ENCODE measurements at regions of chr20 and their contacts with region 1.

Region 1: DNA sequence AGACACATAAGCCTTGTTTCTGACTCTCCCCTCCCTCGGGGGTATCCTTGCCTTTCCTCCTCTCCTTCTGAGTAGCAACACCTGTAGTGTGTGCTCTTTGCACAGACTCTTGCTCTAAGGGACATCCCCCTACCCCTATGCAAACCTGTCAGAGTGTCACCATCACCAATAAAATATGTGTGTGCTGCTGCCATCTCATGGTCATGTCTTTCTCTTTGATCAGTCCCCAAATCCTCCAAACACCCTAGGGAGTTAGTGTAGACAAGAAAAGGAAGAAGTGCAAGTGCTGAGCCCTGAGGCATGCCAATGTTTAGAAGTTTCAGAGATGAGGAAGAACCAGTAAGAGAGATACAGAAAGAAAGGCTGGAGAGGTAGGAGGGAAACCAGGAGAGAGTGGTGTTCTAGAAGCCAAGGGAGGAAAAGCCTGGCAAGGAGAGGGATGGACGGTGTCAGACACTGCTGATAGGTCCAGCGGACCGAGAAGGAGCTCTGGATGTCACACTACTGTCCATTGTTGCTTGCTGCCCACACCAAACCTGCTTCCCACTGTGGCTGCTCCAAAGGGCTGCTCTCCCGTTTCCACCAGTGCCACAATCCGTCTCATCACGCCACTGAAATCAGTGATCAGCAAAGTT is 16.4 kb downstream of the TRMT6 start:
- DNase-seq: peak; percentile 56
- H3K4me3 Mint-ChIP-seq: no peak overlapping the region
- H3K27ac Mint-ChIP-seq: no peak overlapping the region
- H3K4me1 Mint-ChIP-seq: peaks cover 5% of the 10 kb centered on the region
- H3K27me3 Mint-ChIP-seq: no peaks in the 10 kb centered on the region
- CTCF ChIP-seq: peak; percentile 42

Region 2: DNA sequence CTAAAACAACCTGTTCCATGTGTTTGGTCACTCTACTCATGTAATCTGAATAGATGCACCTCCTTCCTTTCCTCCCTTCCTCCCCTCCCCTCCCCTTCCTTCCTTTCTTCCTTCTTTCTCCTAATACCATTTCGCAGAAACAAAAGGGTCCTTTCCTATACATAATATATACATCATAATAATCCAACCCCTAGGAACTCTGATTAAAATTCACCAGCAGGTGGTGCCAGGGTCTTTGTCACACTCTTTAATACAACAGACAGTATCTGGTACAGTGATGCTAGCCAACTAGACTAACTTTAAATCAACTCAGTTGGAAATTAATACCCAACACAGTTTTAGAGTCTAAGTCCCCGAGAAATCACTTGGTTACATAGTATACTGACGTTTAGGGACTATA is 364.9 kb before region 1 on chr20:
- CTCF ChIA-PET with region 1: interaction called, 6 read pairs
- POLR2A ChIA-PET with region 1: interaction called, 4 read pairs
- intact Hi-C with region 1: loop called (anchors 5 kb)
- DNase-seq: peak; percentile 67
- H3K4me3 Mint-ChIP-seq: no peak overlapping the region
- H3K27ac Mint-ChIP-seq: no peak overlapping the region
- H3K4me1 Mint-ChIP-seq: peaks cover 6% of the 10 kb centered on the region
- H3K27me3 Mint-ChIP-seq: no peaks in the 10 kb centered on the region
- CTCF ChIP-seq: peak; percentile 57

Region 3: DNA sequence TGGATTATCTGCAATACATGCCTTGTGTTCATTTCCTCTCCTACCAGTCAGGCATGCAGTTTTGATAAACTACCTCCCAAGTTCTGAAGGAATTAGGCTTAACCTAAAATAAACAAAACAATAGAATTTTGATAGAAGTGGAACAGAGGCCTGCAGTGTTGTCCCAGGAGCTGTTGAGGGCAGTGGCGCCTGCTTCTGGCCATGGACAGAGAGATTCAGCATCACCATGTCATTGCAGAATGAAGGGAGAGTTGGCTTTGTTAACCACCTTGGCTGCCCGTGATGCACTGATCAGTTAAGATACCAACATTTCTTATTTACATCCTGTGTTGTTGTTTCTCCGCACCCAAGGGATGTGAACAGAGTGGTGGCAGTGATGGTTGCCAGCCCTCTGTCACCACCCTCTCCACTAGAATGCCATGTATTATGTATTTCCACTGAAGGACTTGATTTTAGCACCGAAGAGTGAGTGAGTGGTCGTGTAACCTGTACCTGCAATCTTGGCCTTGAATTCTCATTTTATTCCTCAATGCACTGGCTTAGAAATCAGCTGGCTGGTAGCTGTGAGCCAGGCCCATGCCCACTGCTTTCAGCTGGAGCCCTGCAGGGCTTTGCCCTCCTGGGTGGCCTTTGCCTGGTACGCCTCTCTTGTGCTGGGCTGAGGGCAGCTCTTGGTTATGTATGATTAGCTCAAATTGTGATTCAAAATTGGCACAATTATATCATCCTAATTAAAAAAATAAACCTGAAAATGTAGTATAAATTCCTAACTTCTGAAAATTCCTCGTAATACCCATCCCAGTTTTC is 127.3 kb before region 1 on chr20:
- CTCF ChIA-PET with region 1: interaction called, 4 read pairs
- POLR2A ChIA-PET with region 1: no interaction called
- intact Hi-C with region 1: loop called (anchors 5 kb)
- DNase-seq: no peak
- H3K4me3 Mint-ChIP-seq: no peak overlapping the region
- H3K27ac Mint-ChIP-seq: no peak overlapping the region
- H3K4me1 Mint-ChIP-seq: no peaks in the 10 kb centered on the region
- H3K27me3 Mint-ChIP-seq: no peaks in the 10 kb centered on the region
- CTCF ChIP-seq: peak; percentile 27

Region 4: DNA sequence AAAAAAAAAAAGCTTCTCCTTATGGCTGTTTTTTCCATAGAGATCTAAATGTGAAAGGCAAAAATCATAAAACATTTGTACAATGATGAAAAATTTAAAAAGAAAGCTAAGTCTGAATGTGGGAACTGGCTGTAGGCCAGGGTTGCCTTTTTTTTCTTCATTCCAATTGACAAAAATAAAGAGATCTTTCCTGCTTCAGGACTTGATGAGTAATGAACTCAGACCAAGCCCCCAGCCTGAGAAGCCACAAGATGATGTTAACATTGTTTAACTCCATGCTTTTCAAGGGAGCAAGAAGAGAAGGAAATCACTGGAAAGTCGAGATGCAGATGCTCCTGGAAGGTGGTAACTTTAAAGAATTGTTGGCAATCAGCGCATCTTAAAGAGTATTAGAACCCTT is 24.9 kb before region 1 on chr20:
- CTCF ChIA-PET with region 1: no interaction called
- POLR2A ChIA-PET with region 1: no interaction called
- intact Hi-C with region 1: no loop called
- DNase-seq: no peak
- H3K4me3 Mint-ChIP-seq: no peak overlapping the region
- H3K27ac Mint-ChIP-seq: no peak overlapping the region
- H3K4me1 Mint-ChIP-seq: peaks cover 19% of the 10 kb centered on the region
- H3K27me3 Mint-ChIP-seq: peaks cover 38% of the 10 kb centered on the region
- CTCF ChIP-seq: no peak

Region 5: GRCh38 chr20:6169251-6169650 is 235.3 kb after region 1 on chr20:
- CTCF ChIA-PET with region 1: no interaction called
- POLR2A ChIA-PET with region 1: no interaction called
- intact Hi-C with region 1: no loop called
- DNase-seq: peak; percentile 32
- H3K4me3 Mint-ChIP-seq: no peak overlapping the region
- H3K27ac Mint-ChIP-seq: no peak overlapping the region
- H3K4me1 Mint-ChIP-seq: no peaks in the 10 kb centered on the region
- H3K27me3 Mint-ChIP-seq: no peaks in the 10 kb centered on the region
- CTCF ChIP-seq: no peak